ENCODE measurements at regions of chr2 and their contacts with region 1.

Region 1: DNA sequence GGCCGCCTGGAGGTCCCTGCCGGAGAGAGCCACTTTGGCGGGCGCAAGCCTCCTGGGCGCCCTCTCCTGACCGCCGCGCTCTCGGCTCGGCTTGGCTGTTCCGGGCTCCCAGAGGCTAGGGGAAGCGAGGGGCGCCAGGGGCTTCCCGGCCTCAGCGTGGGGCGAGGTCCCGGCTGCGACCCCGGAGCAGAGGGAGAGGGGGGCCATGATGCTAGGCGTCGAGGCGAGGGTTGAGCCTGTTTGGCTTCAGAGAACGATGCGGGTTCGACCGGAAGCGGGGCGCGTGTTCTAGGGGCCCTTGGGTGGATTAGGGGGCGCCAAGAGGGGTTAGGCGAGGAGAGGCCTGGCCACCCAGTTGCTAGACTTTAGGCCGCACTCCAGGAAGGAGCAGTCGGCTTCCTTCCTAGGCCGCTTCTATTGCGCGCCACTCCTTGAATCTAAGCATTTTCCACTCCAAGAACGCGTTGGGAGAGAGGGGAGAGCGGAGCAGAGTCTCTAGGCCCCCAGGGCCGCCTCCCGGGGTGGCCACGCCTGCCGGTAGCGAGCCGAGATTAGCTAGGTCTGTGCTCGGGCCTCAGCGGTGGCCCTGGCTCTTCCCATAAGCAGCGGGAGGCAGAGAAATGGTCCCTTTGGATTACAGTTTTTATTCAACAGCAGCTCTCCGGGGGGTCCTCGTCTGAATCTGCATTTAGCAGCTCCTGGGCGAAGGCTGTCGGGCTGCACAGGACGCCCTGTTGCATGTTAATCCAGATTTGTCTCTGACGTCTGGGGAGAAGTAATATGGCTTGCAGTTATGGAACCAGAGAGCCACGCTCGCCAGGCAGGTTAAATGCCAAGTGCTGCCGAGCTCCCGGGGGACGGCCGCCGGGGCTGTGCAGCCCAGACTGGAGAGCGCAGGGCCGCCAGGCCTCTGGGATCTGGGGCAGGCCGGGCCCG is 11.3 kb downstream of the MEIS1 start:
- DNase-seq: peak in 2 of 3 donors; percentile 66 to 77
- H3K4me3 ChIP-seq: peak overlapping the region in 6 of 7 experiments; percentile 57 to 97 (median 66)
- H3K27ac ChIP-seq: peak overlapping the region; percentile 83 to 92
- H3K4me1 ChIP-seq: peaks cover 25 to 94% (median 62%) of the 10 kb centered on the region in 4 experiments
- H3K27me3 ChIP-seq: no peaks in the 10 kb centered on the region

Region 2: DNA sequence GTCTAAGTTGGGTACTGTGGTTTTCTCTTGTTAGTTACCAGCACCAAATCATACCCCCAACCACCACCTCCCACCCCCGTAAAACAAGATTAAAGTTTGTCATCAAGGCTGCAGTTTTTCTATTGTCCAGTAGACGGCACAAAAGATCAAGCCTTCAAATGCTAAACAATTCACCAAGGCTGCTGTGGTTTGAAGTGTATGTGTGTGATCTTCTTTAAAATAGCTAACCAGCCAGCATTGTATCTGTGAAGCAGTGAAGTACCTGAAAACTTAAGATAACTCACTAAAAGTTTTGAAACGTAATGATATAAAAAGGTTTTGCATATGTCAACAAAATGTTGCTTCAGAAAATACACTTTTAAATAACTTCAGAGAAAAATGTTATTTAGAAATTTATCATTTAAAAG is 17.1 kb before region 1 on chr2:
- CTCF ChIA-PET with region 1: interaction called, 67 read pairs
- POLR2A ChIA-PET with region 1: interaction called, 28 read pairs
- DNase-seq: peak; percentile 81 to 90 (median 89)
- H3K4me3 ChIP-seq: peak overlapping the region in 1 of 7 experiments; percentile 19
- H3K27ac ChIP-seq: no peak overlapping the region
- H3K4me1 ChIP-seq: peaks cover 0 to 69% (median 32%) of the 10 kb centered on the region in 4 experiments
- H3K27me3 ChIP-seq: peaks cover 0 to 22% (median 12%) of the 10 kb centered on the region in 5 experiments

Region 3: DNA sequence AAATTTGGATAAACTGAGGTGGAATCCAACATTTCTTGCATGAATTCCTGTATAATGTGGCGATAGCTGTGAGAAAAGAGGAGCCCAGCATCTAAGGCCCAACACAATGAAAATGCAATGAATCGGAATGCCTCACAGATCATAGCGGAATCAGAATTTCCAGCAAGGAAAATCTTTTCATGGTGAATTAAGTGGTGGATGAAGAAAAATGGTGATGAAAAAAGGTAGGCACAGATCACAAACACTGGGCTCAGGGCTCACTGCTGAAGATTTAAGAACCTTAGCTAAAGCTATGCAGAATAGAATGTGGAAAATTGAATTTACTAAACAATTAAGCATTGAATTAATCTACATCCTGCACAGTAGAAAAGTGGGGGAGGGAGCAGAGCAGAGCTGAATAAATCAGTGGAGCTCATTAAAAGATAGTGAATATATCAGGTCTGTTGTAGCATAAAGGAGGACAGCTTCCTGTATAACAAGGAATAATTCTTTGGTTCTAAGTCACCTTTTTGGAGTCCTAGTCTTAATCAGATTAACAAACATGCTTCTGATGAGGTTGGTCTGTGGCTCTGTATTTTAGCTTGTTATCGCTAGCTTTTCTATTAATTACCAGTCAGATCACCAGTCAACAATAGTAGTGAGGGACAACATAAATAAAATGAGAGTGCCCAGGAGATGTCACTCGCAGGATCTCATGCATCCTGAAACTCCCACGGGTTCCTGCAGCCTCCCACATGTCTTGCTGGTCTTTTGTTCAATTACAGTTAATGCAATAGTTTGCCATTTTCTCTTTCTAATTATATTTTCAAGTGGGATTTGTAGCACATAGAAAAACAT is 15.7 kb after region 1 on chr2:
- CTCF ChIA-PET with region 1: interaction called, 17 read pairs
- POLR2A ChIA-PET with region 1: no interaction called
- DNase-seq: no peak
- H3K4me3 ChIP-seq: no peak overlapping the region
- H3K27ac ChIP-seq: no peak overlapping the region
- H3K4me1 ChIP-seq: peaks cover 0 to 25% (median under 1%) of the 10 kb centered on the region in 4 experiments
- H3K27me3 ChIP-seq: no peaks in the 10 kb centered on the region

Region 4: GRCh38 chr2:66494708-66495107 is 48.5 kb after region 1 on chr2:
- CTCF ChIA-PET with region 1: interaction called, 14 read pairs
- POLR2A ChIA-PET with region 1: no interaction called
- DNase-seq: peak; percentile 51 to 88 (median 84)
- H3K4me3 ChIP-seq: peak overlapping the region in 2 of 7 experiments; percentile 6 to 24
- H3K27ac ChIP-seq: peak overlapping the region; percentile 19 to 72
- H3K4me1 ChIP-seq: peaks cover 30 to 82% (median 55%) of the 10 kb centered on the region in 4 experiments
- H3K27me3 ChIP-seq: no peaks in the 10 kb centered on the region

Region 5: DNA sequence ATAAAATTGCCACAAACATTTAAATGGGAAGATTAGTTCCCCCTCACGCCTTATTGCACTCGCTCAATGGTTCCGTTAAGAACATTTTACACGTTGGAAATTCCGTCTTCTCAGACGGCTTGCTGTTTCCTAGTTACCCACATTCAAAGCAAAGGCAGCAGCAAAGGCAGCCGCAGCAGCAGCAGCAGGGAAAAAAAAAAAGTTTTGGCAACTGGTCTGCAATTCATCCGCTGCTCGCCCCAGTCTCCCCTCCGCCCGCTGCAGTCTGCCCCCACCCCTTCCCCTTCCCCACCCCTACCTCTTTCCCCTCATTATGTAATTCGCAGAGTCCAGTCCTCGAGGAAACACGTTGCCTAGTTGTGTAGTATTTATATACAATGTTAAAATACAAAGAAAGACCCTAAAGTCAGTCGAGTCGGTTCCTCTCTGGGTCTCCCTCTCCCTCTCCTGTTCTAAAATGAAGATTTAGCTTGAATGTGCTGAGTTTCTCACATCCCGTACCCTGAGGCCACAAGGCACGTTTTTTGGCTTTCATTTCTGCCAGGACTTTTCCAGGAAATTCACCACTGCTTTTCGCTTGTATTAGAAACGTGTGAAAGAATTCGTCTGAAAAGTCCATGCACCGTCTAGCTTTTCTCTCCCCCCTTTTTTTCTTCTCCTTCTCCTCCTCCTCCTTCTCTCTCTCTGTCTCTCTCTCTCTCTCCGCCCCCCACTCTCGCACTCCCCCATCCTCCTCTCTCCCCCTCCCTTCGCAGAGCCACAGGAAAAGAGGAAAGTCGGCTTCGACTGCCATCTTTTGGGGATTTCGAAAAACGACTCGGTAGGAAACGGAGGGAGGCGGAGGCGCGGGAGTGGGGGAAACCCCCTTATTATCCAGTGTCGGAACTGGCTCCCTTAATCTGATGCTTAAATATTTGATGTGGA is 128.8 kb after region 1 on chr2:
- CTCF ChIA-PET with region 1: interaction called, 185 read pairs
- POLR2A ChIA-PET with region 1: interaction called, 16 read pairs
- DNase-seq: peak; percentile 91 to 97 (median 95)
- H3K4me3 ChIP-seq: peak overlapping the region; percentile 54 to 97 (median 86)
- H3K27ac ChIP-seq: peak overlapping the region; percentile 87 to 97
- H3K4me1 ChIP-seq: peaks cover under 1 to 70% (median 54%) of the 10 kb centered on the region in 4 experiments
- H3K27me3 ChIP-seq: peaks cover 0 to 16% (median 0%) of the 10 kb centered on the region in 5 experiments

Region 6: GRCh38 chr2:66665124-66665984 is 219.2 kb after region 1 on chr2:
- CTCF ChIA-PET with region 1: no interaction called
- POLR2A ChIA-PET with region 1: no interaction called
- DNase-seq: no peak
- H3K4me3 ChIP-seq: no peak overlapping the region
- H3K27ac ChIP-seq: no peak overlapping the region
- H3K4me1 ChIP-seq: peaks cover 0 to 36% (median 8%) of the 10 kb centered on the region in 4 experiments
- H3K27me3 ChIP-seq: no peaks in the 10 kb centered on the region